Heart right ventricle (tissue), 16 donors: ENCODE measurements at regions of chrX and their contacts with region 1.

Region 1: DNA sequence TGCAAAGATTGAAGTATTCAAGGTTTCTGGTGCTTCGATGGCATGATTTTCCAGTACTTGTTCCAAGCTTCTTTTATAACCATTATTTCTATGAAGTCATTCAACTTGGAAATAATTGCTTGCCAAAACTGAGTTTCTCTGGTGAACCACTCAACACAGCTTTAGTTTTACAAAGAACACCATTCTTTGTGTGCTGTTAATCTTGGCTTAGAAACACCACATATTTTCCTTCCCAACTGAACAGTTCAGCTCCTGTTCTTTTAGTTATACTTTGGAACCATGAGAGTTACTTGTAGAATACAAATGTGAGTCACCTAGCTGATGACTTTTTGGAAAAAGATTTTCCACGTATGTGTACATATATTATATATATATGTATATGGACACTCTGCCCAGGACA is 32.7 kb downstream of the TMEM47 start:
- DNase-seq: no peak
- ATAC-seq: peak in 5 of 8 donors; percentile 44 to 63 (median 52)
- H3K4me3 ChIP-seq: no peak overlapping the region
- H3K27ac ChIP-seq: no peak overlapping the region
- H3K4me1 ChIP-seq: peaks cover 0 to 32% (median 0%) of the 10 kb centered on the region in 9 donors
- H3K27me3 ChIP-seq: peaks cover 0 to 4% (median 0%) of the 10 kb centered on the region in 7 donors
- CTCF ChIP-seq: no peak

Region 2: GRCh38 chrX:33082371-33083093 is 1541.9 kb before region 1 on chrX:
- intact Hi-C with region 1: loop called in 1 of 10 experiments (anchors 5 kb)
- DNase-seq: no peak
- ATAC-seq: peak in 1 of 8 donors; percentile 39
- H3K4me3 ChIP-seq: no peak overlapping the region
- H3K27ac ChIP-seq: peak overlapping the region in 9 of 10 donors; percentile 24 to 71 (median 50)
- H3K4me1 ChIP-seq: peaks cover 0 to 34% (median 4%) of the 10 kb centered on the region in 9 donors
- H3K27me3 ChIP-seq: no peaks in the 10 kb centered on the region
- CTCF ChIP-seq: no peak